ENCODE measurements at regions of chr1 and their contacts with region 1.

Region 1: GRCh38 chr1:23867953-23868556 is at the start of gene FUCA1:
- DNase-seq: peak; percentile 92
- H3K4me3 Mint-ChIP-seq: peak within 1 kb of the TSS; percentile 81
- H3K27ac Mint-ChIP-seq: no peak within 1 kb of the TSS
- H3K4me1 Mint-ChIP-seq: peaks cover 18% of the 10 kb centered on the region
- H3K27me3 Mint-ChIP-seq: peaks cover 11% of the 10 kb centered on the region
- total RNA-seq, gene FUCA1: 3.5 TPM in 2 replicates

Region 2: GRCh38 chr1:23772049-23772853 is 95.8 kb before region 1 on chr1:
- intact Hi-C with region 1: loop called (anchors 1 kb)
- DNase-seq: peak; percentile 80
- H3K4me3 Mint-ChIP-seq: no peak overlapping the region
- H3K27ac Mint-ChIP-seq: no peak overlapping the region
- H3K4me1 Mint-ChIP-seq: peaks cover 27% of the 10 kb centered on the region
- H3K27me3 Mint-ChIP-seq: no peaks in the 10 kb centered on the region

Region 3: DNA sequence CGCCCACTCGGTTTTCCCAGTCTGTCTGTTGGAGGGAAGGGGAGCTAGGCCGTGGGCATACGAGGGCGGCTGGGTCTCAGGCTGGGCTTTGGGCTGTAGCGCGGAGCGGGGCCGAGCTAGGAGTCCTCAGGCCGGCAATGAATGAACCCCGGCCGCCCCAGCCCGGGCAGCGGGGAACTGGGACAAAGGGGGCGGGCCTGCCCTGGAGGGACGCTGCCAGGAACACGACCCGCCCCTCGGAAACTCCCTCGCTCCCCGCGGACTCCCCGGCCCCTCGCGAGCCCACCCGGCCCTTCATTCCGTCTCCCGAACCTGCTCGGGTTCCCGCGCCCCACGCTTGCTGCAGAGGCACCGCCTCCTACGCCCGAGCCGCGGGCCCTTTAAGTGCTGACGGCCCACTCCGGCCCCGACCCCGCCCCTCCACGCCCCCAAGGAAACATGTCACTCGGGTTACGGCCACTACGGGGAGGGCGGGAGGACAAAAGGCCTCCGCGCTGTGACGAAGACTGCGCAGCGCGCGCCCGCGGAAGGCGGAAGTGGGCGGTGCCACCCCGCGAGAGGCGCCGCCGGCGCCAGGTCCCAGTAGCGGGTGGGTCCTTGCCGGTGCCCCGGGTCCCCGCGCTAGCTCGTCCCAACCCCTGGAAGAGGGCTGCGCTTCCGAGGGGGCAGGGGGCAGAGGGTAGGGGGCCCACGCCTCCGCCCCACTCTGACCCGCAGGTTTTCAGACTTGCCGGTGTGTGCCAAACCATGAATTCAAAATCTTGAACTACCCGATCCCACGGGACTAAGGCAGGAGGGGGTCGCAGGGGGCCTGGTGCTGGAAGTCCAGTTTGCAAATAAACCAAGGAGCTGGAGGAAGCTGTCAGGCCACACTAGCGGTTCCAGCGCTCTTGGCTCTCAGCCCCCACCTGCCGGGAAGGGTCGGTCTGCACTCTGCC is 67.4 kb before region 1 on chr1 and contains the start of gene GALE:
- intact Hi-C with region 1: loop called (anchors 2 kb)
- DNase-seq: peak; percentile 93
- H3K4me3 Mint-ChIP-seq: peak within 1 kb of the TSS; percentile 97
- H3K27ac Mint-ChIP-seq: peak within 1 kb of the TSS; percentile 88
- H3K4me1 Mint-ChIP-seq: peaks cover 13% of the 10 kb centered on the region
- H3K27me3 Mint-ChIP-seq: peaks cover 2% of the 10 kb centered on the region
- total RNA-seq, gene GALE: 62.4 and 63.4 TPM in 2 replicates

Region 4: DNA sequence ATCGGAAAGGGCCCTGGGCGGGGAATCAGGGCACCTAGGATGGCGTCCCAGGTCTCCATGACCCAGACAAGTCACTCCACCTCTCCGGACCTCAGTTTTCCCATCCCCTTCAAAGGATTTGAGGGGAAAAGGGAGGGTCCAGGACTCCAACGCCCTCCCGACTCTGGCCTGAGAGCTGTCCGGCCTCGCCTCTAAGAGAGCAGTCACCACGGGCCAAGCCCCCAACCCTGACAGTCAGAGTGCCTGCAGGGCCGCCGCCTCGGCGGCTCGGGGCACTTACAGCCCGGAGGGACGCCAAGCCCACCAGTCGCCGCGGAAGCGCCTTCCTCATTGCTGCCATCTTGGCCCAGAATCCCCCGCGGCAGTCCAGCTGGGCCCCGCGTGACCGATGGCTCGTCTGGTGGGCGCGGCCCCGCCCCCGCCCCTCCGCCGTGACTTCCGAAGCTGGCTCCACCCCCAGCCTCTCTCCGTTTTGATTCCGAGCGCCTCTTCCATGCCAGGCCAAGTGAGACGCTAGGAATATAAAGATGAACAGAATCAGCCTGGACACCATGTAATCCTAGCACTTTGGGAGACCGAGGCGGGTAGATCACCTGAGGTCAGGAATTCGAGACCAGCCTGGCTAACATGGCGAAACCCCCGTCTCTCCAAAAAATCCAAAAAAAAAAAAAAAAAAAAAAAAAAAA is 42.8 kb before region 1 on chr1 and contains the start of gene HMGCL:
- intact Hi-C with region 1: loop called (anchors 1 kb)
- DNase-seq: peak; percentile 81
- H3K4me3 Mint-ChIP-seq: peak within 1 kb of the TSS; percentile 94
- H3K27ac Mint-ChIP-seq: peak within 1 kb of the TSS; percentile 89
- H3K4me1 Mint-ChIP-seq: peaks cover 15% of the 10 kb centered on the region
- H3K27me3 Mint-ChIP-seq: no peaks in the 10 kb centered on the region
- total RNA-seq, gene HMGCL: 18.5 and 19.9 TPM in 2 replicates

Region 5: GRCh38 chr1:23916209-23917131 is 48.4 kb after region 1 on chr1:
- intact Hi-C with region 1: loop called (anchors 1 kb)
- DNase-seq: peak; percentile 36
- H3K4me3 Mint-ChIP-seq: no peak overlapping the region
- H3K27ac Mint-ChIP-seq: peak overlapping the region; percentile 80
- H3K4me1 Mint-ChIP-seq: peaks cover 11% of the 10 kb centered on the region
- H3K27me3 Mint-ChIP-seq: peaks cover 15% of the 10 kb centered on the region

Measured in activated T-helper 1 cell treated with anti-CD3 and anti-CD28 coated beads, Interleukin-12 subunit alpha, Interleukin-12 subunit beta, Interleukin-2, Interleukin-4 antibody, amounts not matched to agents 30 ng/mL and 10 ng/mL and 1 ng/mL, durations not matched to agents 14 hours and 24 hours and 36 hours (primary cell).